ENCODE measurements at regions of chr4 and their contacts with region 1.

Region 1: GRCh38 chr4:125735102-125735501 is 420.3 kb downstream of the FAT4 start:
- DNase-seq: peak; percentile 21
- H3K4me3 ChIP-seq: no peak overlapping the region
- H3K27ac ChIP-seq: peak overlapping the region in 1 of 2 donors; percentile 46
- H3K4me1 ChIP-seq: peaks cover 10% of the 10 kb centered on the region
- H3K27me3 ChIP-seq: no peaks in the 10 kb centered on the region
- CTCF ChIP-seq: no peak
- POLR2A ChIP-seq: no peak

Region 2: GRCh38 chr4:125314676-125315575 is 420.2 kb before region 1 on chr4 and contains the start of gene FAT4:
- intact Hi-C with region 1: loop called (anchors 5 kb)
- DNase-seq: peak; percentile 96
- H3K4me3 ChIP-seq: peak within 1 kb of the TSS; percentile 80 to 87
- H3K27ac ChIP-seq: peak within 1 kb of the TSS; percentile 76 to 89
- H3K4me1 ChIP-seq: peaks cover 13% of the 10 kb centered on the region
- H3K27me3 ChIP-seq: no peaks in the 10 kb centered on the region
- CTCF ChIP-seq: peak in 1 of 3 experiments; percentile 5
- POLR2A ChIP-seq: no peak
- total RNA-seq, gene FAT4: 6.5 to 8.9 TPM

Region 3: GRCh38 chr4:125432104-125432503 is 303.0 kb before region 1 on chr4:
- intact Hi-C with region 1: no loop called
- DNase-seq: no peak
- H3K4me3 ChIP-seq: no peak overlapping the region
- H3K27ac ChIP-seq: no peak overlapping the region
- H3K4me1 ChIP-seq: no peaks in the 10 kb centered on the region
- H3K27me3 ChIP-seq: no peaks in the 10 kb centered on the region
- CTCF ChIP-seq: no peak
- POLR2A ChIP-seq: no peak